PC-3 (cell line): ENCODE measurements at regions of chr5 and their contacts with region 1.

Region 1: DNA sequence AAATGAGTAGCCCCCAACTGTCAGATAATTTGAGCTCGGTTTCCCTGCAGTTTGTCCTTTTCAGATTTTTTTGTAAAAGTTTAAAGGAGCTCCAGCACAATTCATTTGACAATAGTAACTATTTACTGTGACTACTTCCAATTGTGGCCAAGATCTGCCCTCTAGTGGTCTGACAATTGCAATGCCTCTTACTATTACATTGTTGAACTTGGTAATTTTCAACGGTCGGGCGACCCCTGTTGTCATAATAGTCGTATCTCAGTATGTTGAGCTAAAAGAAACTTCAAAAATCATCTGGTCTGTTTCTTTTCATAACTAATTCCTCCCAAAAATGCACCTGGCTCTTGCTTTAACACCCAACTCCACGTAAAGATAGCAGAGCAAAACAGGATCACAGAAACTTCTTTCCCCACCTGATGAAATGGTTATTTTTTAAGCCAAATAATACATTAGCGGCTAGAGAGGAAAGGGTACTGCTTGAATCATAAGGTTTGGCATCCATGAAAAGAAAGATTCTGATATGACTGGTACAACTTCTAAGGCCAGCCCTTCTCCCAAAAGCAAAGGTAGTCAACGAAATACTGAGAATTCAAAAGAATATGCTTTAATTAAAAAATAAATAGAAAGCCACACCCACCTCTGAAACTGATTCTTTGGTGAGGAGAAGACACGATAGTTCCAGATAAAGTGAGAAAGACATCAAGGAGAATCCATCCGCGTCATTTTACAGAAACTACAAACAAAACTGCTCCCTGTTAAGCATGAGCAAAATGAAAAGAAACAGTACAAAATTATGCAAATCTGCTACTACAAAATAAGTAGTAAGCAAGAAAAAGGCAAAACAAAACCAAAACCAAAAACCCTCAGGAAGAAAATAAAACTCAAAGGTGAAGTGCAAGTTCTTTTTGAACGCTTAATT is 76.9 kb upstream of the HTR4 start:
- DNase-seq: peak; percentile 98
- ATAC-seq: peak; percentile 78
- H3K4me3 ChIP-seq: peak overlapping the region; percentile 65
- H3K27ac ChIP-seq: no peak overlapping the region
- H3K4me1 ChIP-seq: peaks cover 54% of the 10 kb centered on the region
- H3K27me3 ChIP-seq: no peaks in the 10 kb centered on the region
- CTCF ChIP-seq: peak; percentile 100

Region 2: DNA sequence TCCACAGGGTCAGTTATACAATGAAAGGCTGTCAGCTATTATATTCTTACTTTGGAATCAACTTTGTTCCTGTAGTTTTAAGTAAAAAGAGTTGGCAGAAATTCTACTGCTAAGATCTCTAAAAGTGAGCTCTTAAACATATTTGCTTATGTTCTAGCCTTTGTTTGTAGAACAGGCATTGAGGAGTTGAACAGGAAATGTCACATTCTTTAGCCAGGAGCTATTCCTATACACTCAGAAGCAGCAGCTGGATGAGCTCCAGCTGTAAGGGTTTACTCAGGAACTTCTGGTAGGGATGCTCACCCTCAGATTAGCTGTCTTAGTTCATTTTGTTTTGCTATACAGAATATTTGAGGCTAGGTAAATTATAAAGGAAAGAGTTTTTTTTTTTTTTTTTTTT is 585.3 kb before region 1 on chr5:
- CTCF ChIA-PET with region 1: interaction called, 13 read pairs
- POLR2A ChIA-PET with region 1: no interaction called
- intact Hi-C with region 1: no loop called
- DNase-seq: peak; percentile 100
- ATAC-seq: peak; percentile 92
- H3K4me3 ChIP-seq: peak overlapping the region; percentile 19; the same call in 1 of the 2 replicates
- H3K27ac ChIP-seq: peak overlapping the region; percentile 81
- H3K4me1 ChIP-seq: peaks cover 48% of the 10 kb centered on the region
- H3K27me3 ChIP-seq: no peaks in the 10 kb centered on the region
- CTCF ChIP-seq: no peak

Region 3: DNA sequence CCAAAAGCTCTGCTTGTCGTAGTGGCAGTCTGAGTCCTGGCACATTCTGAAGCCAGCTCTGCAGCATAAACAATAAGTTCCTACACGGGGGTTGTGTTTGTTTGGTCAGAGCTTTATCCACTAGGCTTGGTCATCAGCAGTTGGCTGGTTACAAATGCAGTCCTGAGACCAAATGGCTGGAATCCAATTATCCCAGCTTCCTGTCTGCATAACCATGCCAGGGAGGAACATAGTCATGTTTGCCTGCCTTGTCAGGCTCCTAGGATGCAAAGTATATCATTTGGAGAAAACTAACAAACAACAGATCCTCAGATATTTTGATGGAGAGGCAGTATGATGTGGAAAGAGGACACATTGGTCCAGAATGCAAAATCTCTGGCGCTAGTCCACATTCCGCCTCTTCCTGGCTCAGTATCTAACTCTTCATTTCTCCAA is 261.7 kb before region 1 on chr5:
- CTCF ChIA-PET with region 1: interaction called, 18 read pairs
- POLR2A ChIA-PET with region 1: no interaction called
- intact Hi-C with region 1: no loop called
- DNase-seq: peak; percentile 97
- ATAC-seq: peak; percentile 76
- H3K4me3 ChIP-seq: no peak overlapping the region
- H3K27ac ChIP-seq: no peak overlapping the region
- H3K4me1 ChIP-seq: peaks cover 28% of the 10 kb centered on the region
- H3K27me3 ChIP-seq: no peaks in the 10 kb centered on the region
- CTCF ChIP-seq: no peak

Region 4: GRCh38 chr5:148687427-148687826 is 43.8 kb before region 1 on chr5:
- CTCF ChIA-PET with region 1: interaction called, 21 read pairs
- POLR2A ChIA-PET with region 1: no interaction called
- intact Hi-C with region 1: no loop called
- DNase-seq: peak; percentile 93
- ATAC-seq: peak; percentile 99
- H3K4me3 ChIP-seq: no peak overlapping the region
- H3K27ac ChIP-seq: no peak overlapping the region
- H3K4me1 ChIP-seq: no peaks in the 10 kb centered on the region
- H3K27me3 ChIP-seq: peaks cover 44% of the 10 kb centered on the region
- CTCF ChIP-seq: peak; percentile 99

Region 5: GRCh38 chr5:148957591-148958202 is 226.5 kb after region 1 on chr5:
- CTCF ChIA-PET with region 1: interaction called, 11 read pairs
- POLR2A ChIA-PET with region 1: no interaction called
- intact Hi-C with region 1: loop called (anchors 1 kb)
- DNase-seq: peak; percentile 86
- ATAC-seq: no peak
- H3K4me3 ChIP-seq: no peak overlapping the region
- H3K27ac ChIP-seq: no peak overlapping the region
- H3K4me1 ChIP-seq: peaks cover 49% of the 10 kb centered on the region
- H3K27me3 ChIP-seq: no peaks in the 10 kb centered on the region
- CTCF ChIP-seq: peak; percentile 100

Region 6: GRCh38 chr5:149035372-149035790 is 304.2 kb after region 1 on chr5:
- CTCF ChIA-PET with region 1: interaction called, 44 read pairs
- POLR2A ChIA-PET with region 1: interaction called, 3 read pairs
- intact Hi-C with region 1: loop called (anchors 1 kb)
- DNase-seq: peak; percentile 98
- ATAC-seq: peak; percentile 92
- H3K4me3 ChIP-seq: no peak overlapping the region
- H3K27ac ChIP-seq: no peak overlapping the region
- H3K4me1 ChIP-seq: peaks cover 42% of the 10 kb centered on the region
- H3K27me3 ChIP-seq: no peaks in the 10 kb centered on the region
- CTCF ChIP-seq: peak; percentile 100

Region 7: GRCh38 chr5:149128023-149128875 is 397.0 kb after region 1 on chr5:
- CTCF ChIA-PET with region 1: interaction called, 13 read pairs
- POLR2A ChIA-PET with region 1: no interaction called
- intact Hi-C with region 1: loop called (anchors 1 kb)
- DNase-seq: peak; percentile 87
- ATAC-seq: peak; percentile 48
- H3K4me3 ChIP-seq: no peak overlapping the region
- H3K27ac ChIP-seq: peak overlapping the region; percentile 19
- H3K4me1 ChIP-seq: peaks cover 71% of the 10 kb centered on the region
- H3K27me3 ChIP-seq: no peaks in the 10 kb centered on the region
- CTCF ChIP-seq: peak; percentile 100

Region 8: DNA sequence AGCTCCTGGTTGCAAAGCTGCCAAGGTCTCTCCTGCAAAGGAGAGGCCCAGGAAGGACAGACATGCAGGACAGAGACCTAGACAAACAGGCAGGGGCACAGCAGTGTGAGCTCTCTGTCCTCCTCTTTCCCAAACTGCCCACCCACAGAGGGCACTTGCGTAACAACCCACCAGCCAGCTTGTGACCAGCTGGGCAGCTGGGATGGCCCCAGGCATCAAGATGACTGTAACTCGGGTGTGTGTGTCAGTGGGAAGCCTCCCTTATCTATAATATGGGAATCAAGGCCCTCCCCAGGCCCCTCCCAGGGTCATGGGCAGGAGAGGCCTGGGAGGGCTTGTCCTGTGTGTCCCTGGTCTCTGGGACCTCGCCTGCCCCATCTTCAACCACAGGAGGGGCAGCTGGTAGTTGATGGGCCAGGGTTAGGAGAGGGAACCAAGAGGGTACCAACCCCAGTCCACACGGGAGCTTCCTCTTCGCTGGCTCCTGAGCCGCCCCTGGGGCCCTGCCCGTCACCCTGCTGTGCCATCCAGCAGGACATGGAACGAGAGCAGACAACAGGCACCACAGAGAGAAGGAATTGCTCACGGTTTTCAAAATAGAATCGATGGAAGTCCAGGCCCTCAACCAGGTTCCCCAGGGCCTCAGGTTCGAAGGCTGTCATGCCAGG is 1496.5 kb after region 1 on chr5:
- CTCF ChIA-PET with region 1: no interaction called
- POLR2A ChIA-PET with region 1: no interaction called
- intact Hi-C with region 1: no loop called
- DNase-seq: no peak
- ATAC-seq: 0 out of 2 replicates have a peak, but pooled peaks have one; percentile 7
- H3K4me3 ChIP-seq: no peak overlapping the region
- H3K27ac ChIP-seq: no peak overlapping the region
- H3K4me1 ChIP-seq: no peaks in the 10 kb centered on the region
- H3K27me3 ChIP-seq: no peaks in the 10 kb centered on the region
- CTCF ChIP-seq: no peak